HEK293 (cell line): ENCODE measurements at regions of chr17 and their contacts with region 1.

Region 1: GRCh38 chr17:47315451-47316266 is 8.1 kb upstream of the EFCAB13 start:
- H3K4me3 ChIP-seq: no peak overlapping the region
- H3K27ac ChIP-seq: no peak overlapping the region
- H3K4me1 ChIP-seq: no peaks in the 10 kb centered on the region
- CTCF ChIP-seq: peak; percentile 47; the same call in 1 of the 2 replicates

Region 2: DNA sequence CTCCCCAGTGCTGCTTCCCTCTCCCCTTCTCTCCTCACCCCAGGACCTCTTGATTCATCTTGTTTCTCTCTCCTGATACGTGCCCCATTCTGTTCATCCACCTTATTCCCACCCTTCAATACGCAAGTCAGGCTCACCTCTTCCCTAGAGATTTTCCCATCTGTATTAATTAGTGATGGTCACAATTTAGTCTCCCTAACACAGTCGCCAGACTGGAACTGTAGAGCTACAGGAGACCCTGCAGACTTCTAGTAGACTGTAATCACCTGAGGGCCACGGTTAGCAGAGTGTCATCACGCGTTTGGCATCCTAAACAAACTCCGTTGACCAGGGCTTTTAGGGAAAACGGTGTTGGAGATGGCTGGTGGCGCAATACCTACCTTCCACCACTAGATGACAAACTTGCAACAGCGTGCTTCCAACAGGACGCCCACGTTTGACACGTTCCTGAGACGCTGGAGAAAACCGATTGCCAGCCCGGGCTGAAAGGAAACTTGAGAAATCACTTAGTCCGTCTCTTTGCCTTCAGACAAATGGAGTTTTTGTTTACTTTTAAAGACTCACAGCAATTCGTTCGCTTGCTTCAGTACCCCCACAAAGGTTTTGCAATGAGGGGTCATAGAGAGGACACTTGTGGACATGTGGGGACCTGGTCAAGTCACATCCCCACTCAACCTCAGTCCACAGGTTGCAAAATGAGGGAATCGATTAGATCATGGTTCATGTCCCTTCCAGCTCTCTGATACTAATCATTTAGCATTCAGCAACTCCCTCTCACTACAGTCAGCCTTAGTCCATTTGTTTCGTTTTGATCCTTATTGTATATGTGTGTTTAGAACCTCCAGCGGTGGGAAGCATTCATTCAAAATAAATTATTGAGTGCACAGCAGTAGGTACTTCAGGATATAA is 85.9 kb before region 1 on chr17:
- CTCF ChIA-PET with region 1: interaction called, 164 read pairs
- POLR2A ChIA-PET with region 1: interaction called, 3 read pairs
- H3K4me3 ChIP-seq: no peak overlapping the region
- H3K27ac ChIP-seq: no peak overlapping the region; the same call in 1 of the 2 replicates
- H3K4me1 ChIP-seq: peaks cover 2% of the 10 kb centered on the region; the same call in 1 of the 2 replicates
- CTCF ChIP-seq: peak; percentile 80

Region 3: DNA sequence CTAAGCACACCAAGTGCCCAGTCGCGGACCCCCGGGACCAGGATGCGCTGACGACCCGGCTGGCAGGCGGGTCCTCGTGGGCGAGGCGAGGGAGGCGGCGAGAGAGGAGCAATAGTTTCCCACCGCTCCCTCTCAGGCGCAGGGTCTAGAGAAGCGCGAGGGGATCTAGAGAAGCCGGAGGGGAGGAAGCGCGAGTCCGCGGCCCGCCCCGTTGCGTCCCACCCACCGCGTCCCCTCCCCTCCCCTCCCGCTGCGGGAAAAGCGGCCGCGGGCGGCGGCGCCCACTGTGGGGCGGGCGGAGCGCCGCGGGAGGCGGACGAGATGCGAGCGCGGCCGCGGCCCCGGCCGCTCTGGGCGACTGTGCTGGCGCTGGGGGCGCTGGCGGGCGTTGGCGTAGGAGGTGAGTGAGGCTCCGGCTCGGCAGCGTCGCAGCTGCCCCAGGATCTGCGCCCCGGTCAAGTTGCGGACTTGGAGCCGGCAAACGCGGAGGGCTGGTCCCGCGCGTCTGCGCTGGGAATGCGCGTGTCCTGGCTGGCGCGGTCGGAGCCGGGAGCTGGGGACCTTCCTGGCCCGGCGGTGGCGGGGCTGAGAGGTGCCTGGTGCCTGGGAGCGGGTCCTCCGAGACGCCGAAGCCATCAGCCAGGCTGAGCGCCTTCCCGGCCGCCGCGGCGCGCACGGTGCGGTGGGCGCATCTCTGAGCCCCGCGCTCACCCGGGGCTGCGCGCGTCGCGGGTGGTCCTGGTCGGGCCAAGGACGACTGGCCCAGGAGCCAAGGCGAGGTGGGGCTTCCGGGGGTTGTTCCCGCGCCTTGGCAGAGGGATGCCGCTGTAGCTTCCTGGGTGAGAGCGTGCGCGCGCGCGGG is 61.9 kb before region 1 on chr17 and contains the start of gene ITGB3:
- CTCF ChIA-PET with region 1: interaction called, 26 read pairs
- POLR2A ChIA-PET with region 1: interaction called, 3 read pairs
- H3K4me3 ChIP-seq: peak within 1 kb of the TSS; percentile 65
- H3K27ac ChIP-seq: peak within 1 kb of the TSS; percentile 27; the same call in 1 of the 2 replicates
- H3K4me1 ChIP-seq: no peaks in the 10 kb centered on the region; the same call in 1 of the 2 replicates
- CTCF ChIP-seq: peak; percentile 63

Region 4: GRCh38 chr17:47305302-47305923 is 10.2 kb before region 1 on chr17:
- CTCF ChIA-PET with region 1: interaction called, 14 read pairs
- POLR2A ChIA-PET with region 1: no interaction called
- H3K4me3 ChIP-seq: no peak overlapping the region
- H3K27ac ChIP-seq: no peak overlapping the region
- H3K4me1 ChIP-seq: no peaks in the 10 kb centered on the region
- CTCF ChIP-seq: no peak

Region 5: GRCh38 chr17:47352848-47353247 is 37.2 kb after region 1 on chr17:
- CTCF ChIA-PET with region 1: no interaction called
- POLR2A ChIA-PET with region 1: no interaction called
- H3K4me3 ChIP-seq: no peak overlapping the region
- H3K27ac ChIP-seq: no peak overlapping the region
- H3K4me1 ChIP-seq: no peaks in the 10 kb centered on the region
- CTCF ChIP-seq: no peak

Region 6: DNA sequence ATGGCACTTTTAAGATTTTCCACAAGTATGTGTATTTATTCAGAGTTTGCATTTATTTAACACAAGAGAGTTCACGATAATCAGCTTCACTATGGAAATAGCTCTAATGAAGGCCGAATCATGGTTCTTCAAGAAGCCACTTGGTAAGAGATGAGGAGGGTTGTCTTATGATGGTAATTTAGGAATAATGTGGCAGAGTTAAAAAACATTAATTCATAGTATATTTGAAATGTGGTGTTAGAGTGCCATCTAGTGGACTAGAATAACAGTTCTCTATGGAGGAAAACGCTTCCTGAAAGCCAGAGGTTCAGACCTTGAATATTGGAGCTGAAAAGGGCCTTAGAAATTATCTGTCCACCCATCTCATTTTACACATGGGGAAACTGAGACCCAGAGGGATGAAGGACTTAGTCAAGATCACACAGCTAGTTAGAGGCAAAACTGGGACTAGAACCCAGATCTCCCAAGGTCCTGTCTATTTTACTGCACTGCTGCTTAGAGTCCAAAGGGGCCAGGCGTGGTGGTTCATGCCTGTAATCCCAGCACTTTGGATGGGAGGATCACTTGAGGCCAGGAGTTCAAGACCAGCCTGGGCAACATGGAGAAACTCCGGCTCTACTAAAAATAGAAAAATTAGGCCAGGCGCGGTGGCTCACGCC is 300.2 kb after region 1 on chr17:
- CTCF ChIA-PET with region 1: interaction called, 16 read pairs
- POLR2A ChIA-PET with region 1: no interaction called
- H3K4me3 ChIP-seq: no peak overlapping the region
- H3K27ac ChIP-seq: no peak overlapping the region
- H3K4me1 ChIP-seq: peaks cover 11% of the 10 kb centered on the region
- CTCF ChIP-seq: peak; percentile 41; the same call in 1 of the 2 replicates

Region 7: GRCh38 chr17:48259694-48260291 is 944.1 kb after region 1 on chr17:
- CTCF ChIA-PET with region 1: no interaction called
- POLR2A ChIA-PET with region 1: no interaction called
- H3K4me3 ChIP-seq: no peak overlapping the region
- H3K27ac ChIP-seq: no peak overlapping the region
- H3K4me1 ChIP-seq: peaks cover 6% of the 10 kb centered on the region
- CTCF ChIP-seq: peak; percentile 85